HEK293 (cell line): ENCODE measurements at regions of chr17 and their contacts with region 1.

Region 1: DNA sequence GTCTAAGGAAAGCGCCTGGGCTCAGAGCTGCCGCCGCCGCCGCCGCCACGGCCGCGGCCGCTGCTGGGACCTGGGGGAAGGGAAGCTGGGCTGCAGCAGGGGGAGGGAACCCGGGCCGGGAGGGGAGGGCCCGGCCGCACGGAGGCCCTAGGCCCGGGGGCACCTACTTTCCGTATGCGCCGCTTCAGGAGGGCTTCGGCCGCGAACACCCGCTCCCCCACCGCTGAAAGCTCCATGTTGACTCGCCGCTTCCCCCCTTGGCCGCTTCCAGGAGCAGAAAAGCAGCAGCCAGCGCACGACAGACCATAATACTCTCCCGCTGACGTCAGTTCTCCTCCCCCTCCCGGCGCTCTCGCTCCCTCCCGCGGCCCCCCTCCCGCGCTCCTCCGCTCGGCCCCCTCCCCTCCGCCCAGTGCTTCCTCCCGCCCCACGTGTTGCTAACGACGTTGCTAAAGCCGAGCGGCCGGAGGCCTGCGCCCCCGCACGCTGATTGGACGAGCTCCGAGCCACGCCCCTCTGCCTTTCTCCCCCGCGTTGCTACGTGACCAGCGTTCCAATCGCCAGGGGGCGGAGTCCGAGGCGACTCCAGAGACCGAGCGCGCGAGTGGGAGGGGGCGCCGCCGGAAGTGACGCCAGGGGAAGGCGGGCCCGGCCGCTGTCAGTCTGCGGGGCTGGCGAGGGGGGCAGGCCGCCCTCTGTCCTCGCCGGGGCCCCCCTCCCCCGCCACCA is at the start of gene CBX8:
- H3K4me3 ChIP-seq: peak within 1 kb of the TSS; percentile 95
- H3K27ac ChIP-seq: peak within 1 kb of the TSS; percentile 88
- H3K4me1 ChIP-seq: peaks cover 30% of the 10 kb centered on the region
- CTCF ChIP-seq: no peak; the same call in 1 of the 2 replicates

Region 2: DNA sequence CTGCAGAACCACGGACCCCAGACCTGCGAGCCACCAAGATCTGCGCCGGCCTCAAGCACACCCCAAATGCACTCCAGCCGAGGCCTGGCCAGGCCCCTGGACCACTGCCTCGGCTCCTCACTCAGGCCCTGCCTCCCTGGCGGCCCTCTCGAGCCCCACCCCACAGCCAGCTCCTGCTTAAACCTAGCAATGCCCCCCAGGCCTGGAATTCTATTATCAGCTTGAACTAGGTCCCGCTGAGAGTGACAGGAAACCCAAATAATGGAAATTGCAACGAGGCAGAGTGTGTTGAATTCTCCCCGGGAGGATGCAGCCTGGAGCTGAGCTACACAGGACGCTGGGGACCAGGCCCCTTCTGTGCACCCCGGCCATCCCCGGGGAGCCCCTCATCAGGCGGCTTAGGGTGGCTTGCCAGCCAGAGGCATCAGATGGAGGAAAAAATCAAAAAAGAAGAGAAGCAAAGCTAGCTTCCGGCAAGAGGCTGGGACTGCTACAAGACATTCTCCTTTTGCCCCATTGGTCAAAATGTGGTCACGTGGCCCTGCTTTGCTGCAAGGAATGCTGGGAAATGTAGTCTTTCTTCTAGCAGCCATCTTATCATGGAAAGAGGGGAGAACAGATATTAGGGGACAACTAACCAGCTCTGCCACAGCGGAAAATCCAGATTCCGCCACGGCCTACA is 68.6 kb before region 1 on chr17:
- CTCF ChIA-PET with region 1: no interaction called
- POLR2A ChIA-PET with region 1: no interaction called
- H3K4me3 ChIP-seq: no peak overlapping the region
- H3K27ac ChIP-seq: no peak overlapping the region
- H3K4me1 ChIP-seq: no peaks in the 10 kb centered on the region
- CTCF ChIP-seq: no peak

Region 3: DNA sequence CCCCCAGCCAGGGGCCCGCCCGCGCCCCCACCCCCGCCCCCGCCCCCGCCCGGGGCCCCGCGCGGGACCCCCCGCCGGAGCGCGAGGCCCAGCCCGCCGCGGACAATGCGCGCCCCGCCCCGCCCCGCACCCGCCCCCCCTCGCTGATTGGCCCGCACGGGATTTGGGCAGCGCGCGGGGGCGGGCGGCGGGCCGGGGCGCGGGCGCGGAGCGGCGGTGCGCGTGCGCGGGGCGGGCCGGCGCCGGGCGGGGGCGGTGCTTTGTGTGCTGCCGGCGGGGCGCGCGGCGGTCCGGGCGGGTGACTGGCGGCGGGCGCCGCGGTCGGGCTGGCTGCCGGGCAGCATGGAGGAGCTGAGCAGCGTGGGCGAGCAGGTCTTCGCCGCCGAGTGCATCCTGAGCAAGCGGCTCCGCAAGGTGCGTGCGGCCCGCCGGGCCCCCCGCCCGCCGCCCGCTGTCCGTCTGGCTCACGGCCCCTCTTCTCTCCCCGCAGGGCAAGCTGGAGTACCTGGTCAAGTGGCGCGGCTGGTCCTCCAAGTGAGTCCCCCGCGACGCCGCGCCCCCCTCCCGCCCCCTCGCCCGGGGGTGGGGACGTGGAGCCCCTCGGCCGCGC is 18.9 kb before region 1 on chr17 and contains the start of gene CBX2:
- CTCF ChIA-PET with region 1: interaction called, 4 read pairs
- POLR2A ChIA-PET with region 1: interaction called, 17 read pairs
- H3K4me3 ChIP-seq: peak within 1 kb of the TSS; percentile 67
- H3K27ac ChIP-seq: peak within 1 kb of the TSS; percentile 85
- H3K4me1 ChIP-seq: peaks cover 21% of the 10 kb centered on the region
- CTCF ChIP-seq: no peak

Region 4: GRCh38 chr17:79844869-79845600 is 48.1 kb after region 1 on chr17:
- CTCF ChIA-PET with region 1: interaction called, 8 read pairs
- POLR2A ChIA-PET with region 1: interaction called, 52 read pairs
- H3K4me3 ChIP-seq: no peak overlapping the region
- H3K27ac ChIP-seq: no peak overlapping the region
- H3K4me1 ChIP-seq: peaks cover 14% of the 10 kb centered on the region; the same call in 1 of the 2 replicates
- CTCF ChIP-seq: peak; percentile 73

Region 5: GRCh38 chr17:79850571-79851461 is 53.9 kb after region 1 on chr17:
- CTCF ChIA-PET with region 1: no interaction called
- POLR2A ChIA-PET with region 1: interaction called, 14 read pairs
- H3K4me3 ChIP-seq: no peak overlapping the region
- H3K27ac ChIP-seq: no peak overlapping the region
- H3K4me1 ChIP-seq: no peaks in the 10 kb centered on the region
- CTCF ChIP-seq: no peak

Region 6: GRCh38 chr17:80263253-80264204 is 466.6 kb after region 1 on chr17:
- CTCF ChIA-PET with region 1: no interaction called
- POLR2A ChIA-PET with region 1: no interaction called
- H3K4me3 ChIP-seq: no peak overlapping the region
- H3K27ac ChIP-seq: no peak overlapping the region
- H3K4me1 ChIP-seq: peaks cover 6% of the 10 kb centered on the region
- CTCF ChIP-seq: no peak